ENCODE measurements at regions of chr12 and their contacts with region 1.

Region 1: DNA sequence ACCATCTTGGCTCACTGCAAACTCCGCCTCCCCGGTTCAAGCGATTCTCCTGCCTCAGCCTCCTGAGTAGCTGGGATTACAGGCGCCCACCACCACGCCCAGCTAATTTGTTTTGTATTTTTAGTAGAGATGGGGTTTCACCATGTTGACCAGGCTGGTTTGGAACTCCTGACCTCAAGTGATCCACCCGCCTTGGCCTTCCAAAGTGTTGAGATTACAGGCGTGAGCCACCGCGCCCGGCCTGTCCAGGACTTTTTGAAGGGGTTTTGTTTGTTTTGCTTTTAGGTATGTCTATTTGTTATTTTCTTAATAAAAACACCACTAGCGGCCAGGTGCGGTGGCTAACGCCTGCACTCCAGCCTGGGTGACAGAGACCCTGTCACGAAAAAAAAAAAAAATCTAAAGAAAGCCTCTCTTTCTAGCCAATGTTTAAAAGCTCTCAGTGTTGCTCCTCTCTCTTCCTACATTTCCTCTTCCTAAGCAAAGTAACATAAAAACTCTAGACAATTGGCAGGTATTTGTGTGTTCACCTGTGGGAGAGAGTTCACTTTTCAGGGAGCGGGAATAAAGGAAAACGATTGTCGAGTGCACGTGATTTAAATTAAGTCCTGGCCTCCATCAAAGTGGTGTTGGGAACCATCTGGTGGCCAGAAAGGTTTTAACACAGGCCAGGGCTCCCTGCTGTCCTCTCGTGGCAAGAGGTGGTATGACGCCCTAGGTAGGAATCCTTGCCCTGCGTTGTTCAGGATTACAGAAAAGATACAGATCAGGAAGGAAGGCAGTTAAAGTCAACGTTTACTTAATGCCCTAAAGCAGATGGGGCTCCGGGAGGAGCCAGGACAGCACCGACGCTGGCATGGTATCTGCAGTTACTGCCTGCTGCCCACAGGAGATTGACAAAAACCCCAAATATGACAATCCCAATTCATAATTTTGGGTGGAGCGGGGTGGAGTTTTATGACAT is 36.2 kb upstream of the ATP23 start:
- DNase-seq: peak; percentile 87
- ATAC-seq: peak; percentile 98
- H3K4me3 ChIP-seq: peak overlapping the region; percentile 15
- H3K27ac ChIP-seq: no peak overlapping the region
- H3K4me1 ChIP-seq: peaks cover 2% of the 10 kb centered on the region
- H3K27me3 ChIP-seq: no peaks in the 10 kb centered on the region
- CTCF ChIP-seq: peak; percentile 100

Region 2: GRCh38 chr12:57772429-57773322 is 132.5 kb before region 1 on chr12 and contains the start of gene EEF1AKMT3:
- intact Hi-C with region 1: no loop called
- DNase-seq: peak; percentile 85
- ATAC-seq: peak; percentile 67
- H3K4me3 ChIP-seq: peak within 1 kb of the TSS; percentile 78
- H3K27ac ChIP-seq: peak within 1 kb of the TSS; percentile 92
- H3K4me1 ChIP-seq: peaks cover 18% of the 10 kb centered on the region
- H3K27me3 ChIP-seq: no peaks in the 10 kb centered on the region
- CTCF ChIP-seq: no peak
- total RNA-seq, gene EEF1AKMT3: 8.0 TPM

Region 3: GRCh38 chr12:57829025-57829777 is 75.9 kb before region 1 on chr12:
- intact Hi-C with region 1: loop called (anchors 5 kb)
- DNase-seq: no peak
- ATAC-seq: no peak
- H3K4me3 ChIP-seq: no peak overlapping the region
- H3K27ac ChIP-seq: peak overlapping the region; percentile 26
- H3K4me1 ChIP-seq: peaks cover 62% of the 10 kb centered on the region
- H3K27me3 ChIP-seq: no peaks in the 10 kb centered on the region
- CTCF ChIP-seq: no peak